ENCODE measurements at regions of chr3 and their contacts with region 1.

Region 1: DNA sequence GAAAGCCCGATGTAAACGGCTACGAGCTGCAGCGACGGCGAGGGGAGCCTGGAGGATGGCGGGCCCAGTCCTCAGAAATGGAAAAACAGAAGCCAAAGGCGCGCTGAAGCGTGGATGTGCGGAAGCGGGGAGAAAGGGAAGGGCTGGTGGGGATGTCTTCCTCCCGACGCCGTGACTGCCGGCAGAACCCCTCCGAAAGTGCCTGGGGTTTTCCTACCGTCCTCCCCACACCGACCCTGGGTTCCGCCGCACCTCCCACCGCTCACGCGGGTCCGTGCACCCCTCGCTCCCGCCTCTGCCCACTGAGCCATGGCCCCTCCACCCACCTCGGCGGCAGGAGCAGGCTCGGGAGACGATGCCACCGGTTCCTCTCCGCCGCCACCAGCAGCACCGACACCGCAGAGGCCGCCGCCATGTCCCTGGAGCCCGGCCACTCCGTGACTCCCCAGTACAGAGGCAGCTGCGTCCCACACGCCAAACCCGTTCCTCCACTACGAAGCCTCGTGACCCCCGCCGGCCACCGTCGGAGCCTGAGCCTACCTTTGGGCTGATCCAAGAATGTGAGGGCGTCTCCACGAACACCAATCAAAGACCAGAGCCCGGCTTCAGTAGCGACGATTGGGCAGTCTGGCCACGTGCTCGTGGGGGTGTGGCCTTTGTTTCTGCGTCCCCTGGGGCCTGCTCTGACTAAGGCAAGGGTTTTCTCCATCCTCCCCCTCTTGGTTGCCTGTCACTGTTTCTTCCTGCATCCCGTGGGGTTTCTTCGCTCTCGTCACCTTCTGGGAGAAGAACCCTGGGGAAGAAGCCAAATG is at the start of gene MCCC1:
- DNase-seq: peak; percentile 99
- H3K4me3 ChIP-seq: peak within 1 kb of the TSS; percentile 74
- H3K27ac ChIP-seq: peak within 1 kb of the TSS; percentile 65
- H3K4me1 ChIP-seq: peaks cover 3% of the 10 kb centered on the region
- H3K27me3 ChIP-seq: no peaks in the 10 kb centered on the region
- CTCF ChIP-seq: no peak
- total RNA-seq, gene MCCC1: 24.9 to 27.2 TPM

Region 2: GRCh38 chr3:182980204-182981037 is 118.8 kb before region 1 on chr3 and contains the start of gene DCUN1D1:
- intact Hi-C with region 1: loop called (anchors 5 kb)
- DNase-seq: peak; percentile 90
- H3K4me3 ChIP-seq: peak within 1 kb of the TSS; percentile 96
- H3K27ac ChIP-seq: peak within 1 kb of the TSS; percentile 75
- H3K4me1 ChIP-seq: peaks cover 4% of the 10 kb centered on the region
- H3K27me3 ChIP-seq: no peaks in the 10 kb centered on the region
- CTCF ChIP-seq: no peak
- total RNA-seq, gene DCUN1D1: 38.9 to 56.6 TPM

Measured in colonic mucosa (tissue), 4 donors.